ENCODE measurements at regions of chr5 and their contacts with region 1.

Region 1: DNA sequence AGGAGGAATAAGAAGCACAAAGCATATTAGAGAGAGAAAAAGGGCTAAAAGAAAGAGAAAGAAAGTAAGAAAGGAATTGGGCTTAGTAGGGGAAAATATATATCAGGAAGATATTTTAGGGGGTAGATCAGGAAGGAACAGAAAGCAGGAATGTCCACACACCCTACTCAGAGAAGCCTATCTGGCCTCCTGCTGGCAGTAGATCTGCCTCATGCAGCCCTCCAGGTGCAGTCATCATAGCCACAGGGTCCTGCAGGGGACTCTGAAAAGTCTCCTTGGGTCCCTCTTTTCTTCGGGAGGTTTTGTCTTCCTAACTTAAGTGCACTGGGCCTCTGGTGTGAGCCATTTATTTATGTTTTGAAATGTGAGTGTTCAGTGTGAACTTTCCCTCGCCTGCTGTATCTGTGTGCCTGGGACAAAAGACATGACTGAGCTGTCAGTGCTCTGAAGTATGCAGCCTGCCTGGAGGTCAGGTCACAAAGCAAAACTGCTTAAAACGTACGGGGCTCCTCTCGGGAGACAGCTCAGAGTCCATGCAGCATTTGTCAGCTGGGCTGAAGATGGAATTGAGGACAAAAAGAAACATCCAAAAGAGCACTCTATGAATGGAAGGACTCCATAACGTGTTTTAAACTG is 151.5 kb upstream of the GDNF start:
- DNase-seq: no peak

Region 2: DNA sequence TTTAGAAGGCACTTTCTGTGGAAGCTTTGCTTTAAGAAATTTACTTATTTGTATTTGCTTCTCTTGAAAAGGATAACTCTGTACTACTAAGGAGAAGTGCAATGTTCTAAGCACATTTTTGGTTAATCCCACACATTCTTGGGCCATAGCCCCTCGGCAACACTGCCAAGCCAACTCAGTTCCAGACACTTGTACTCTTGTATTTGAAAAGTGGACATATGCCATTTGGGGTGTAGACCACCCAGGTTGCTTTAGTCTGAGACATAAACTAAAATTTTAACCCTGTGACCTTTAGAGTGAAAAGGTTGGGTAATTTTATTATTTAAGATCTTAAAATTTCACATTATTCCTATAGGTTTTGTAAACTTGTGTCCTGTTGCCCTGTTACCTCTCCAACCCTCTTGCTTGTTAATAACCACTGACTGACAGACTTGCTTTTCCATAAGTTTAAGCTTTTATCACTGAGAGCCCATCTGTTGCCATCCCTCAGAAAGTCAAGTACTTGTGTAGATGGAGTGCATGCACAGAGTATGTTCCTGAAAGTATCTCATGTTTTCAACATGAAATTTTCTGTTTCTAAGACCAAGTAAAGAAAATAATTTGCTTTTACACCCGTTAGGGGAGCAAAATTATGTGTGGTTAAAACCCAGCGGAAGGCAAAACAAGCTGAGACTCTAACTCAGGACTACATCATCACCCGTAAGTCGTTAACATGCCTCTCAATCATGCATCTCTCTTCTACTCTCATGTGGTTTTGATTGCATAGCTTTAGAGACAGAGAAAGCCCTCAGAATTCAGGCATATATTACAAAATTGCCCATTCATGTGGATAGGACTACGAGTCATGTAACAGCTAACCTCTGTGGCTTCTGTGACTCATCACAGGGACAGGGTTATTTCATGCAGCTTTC is 268.9 kb before region 1 on chr5:
- intact Hi-C with region 1: no loop called
- DNase-seq: no peak

Region 3: GRCh38 chr5:37915097-37915736 is 76.2 kb before region 1 on chr5:
- intact Hi-C with region 1: loop called (anchors 2 kb)
- DNase-seq: no peak

Region 4: GRCh38 chr5:37952021-37952721 is 39.2 kb before region 1 on chr5:
- intact Hi-C with region 1: no loop called
- DNase-seq: no peak